ENCODE measurements at regions of chr15 and their contacts with region 1.

Region 1: DNA sequence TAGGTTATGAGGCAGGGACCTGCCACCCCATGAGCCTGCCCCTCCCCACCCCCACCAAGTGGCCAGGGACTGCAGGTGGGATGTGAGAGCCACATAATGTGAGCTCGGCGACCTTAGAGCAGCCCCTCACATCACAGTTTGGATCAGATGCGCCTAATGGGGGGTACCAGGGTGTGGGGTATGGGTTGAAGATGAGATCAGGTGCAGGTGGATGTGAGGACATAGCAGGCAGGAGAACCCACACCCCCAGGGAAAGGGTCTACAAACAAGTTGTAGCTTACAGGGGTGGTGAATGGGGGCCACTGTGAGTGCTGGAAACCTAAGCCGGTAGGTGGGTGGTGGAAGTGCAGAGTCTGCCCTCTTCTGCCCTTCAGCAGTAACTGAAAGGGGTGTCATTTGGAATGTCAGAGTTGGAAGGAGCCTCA is 94.0 kb downstream of the CORO2B start:
- DNase-seq: no peak
- H3K4me3 Mint-ChIP-seq: no peak overlapping the region
- H3K27ac Mint-ChIP-seq: no peak overlapping the region
- H3K4me1 Mint-ChIP-seq: no peaks in the 10 kb centered on the region
- H3K27me3 Mint-ChIP-seq: peaks cover 14% of the 10 kb centered on the region

Region 2: DNA sequence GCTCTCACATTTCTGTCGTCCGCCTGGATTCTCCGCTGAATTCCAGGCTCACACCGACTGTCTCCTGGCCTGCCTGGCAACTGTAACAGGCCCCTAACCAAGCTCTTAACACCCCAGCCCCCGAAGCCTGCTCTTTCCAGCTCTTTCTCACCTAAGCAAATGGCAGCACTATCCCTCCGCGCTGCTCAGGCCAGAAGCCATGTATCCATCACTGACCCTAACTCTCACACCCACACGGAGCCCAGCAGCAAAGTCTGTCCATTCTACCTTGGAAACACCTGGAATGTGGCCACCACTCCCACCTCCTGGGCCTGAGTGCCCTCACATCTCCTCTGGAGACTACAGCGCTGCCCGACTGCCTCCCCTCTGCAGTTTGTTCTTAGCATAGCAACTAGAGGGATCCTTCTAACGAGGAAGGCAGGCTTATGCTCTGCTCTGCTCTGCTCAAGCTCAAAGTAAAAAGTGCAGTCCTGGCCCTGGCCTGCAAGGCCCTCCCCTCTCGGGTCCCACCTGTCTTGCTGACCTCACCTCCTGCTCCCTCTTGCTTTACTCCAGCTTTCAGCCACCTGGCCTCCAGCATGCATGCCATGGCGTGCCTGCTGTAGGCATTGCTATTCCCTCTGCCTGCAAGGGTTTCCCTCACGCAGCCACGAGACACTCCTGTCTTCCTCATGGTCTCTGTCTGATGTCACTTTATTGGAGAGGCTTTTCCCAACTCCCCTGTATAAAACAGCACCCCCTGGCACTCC is 368.0 kb before region 1 on chr15:
- CTCF ChIA-PET with region 1: interaction called, 14 read pairs
- POLR2A ChIA-PET with region 1: no interaction called
- DNase-seq: peak; percentile 9
- H3K4me3 Mint-ChIP-seq: no peak overlapping the region
- H3K27ac Mint-ChIP-seq: no peak overlapping the region
- H3K4me1 Mint-ChIP-seq: peaks cover 9% of the 10 kb centered on the region
- H3K27me3 Mint-ChIP-seq: peaks cover 7% of the 10 kb centered on the region

Region 3: GRCh38 chr15:68559345-68560310 is 113.2 kb before region 1 on chr15:
- CTCF ChIA-PET with region 1: interaction called, 41 read pairs
- POLR2A ChIA-PET with region 1: no interaction called
- DNase-seq: peak; percentile 73
- H3K4me3 Mint-ChIP-seq: peak overlapping the region; percentile 57
- H3K27ac Mint-ChIP-seq: no peak overlapping the region
- H3K4me1 Mint-ChIP-seq: peaks cover 21% of the 10 kb centered on the region
- H3K27me3 Mint-ChIP-seq: peaks cover 50% of the 10 kb centered on the region

Region 4: DNA sequence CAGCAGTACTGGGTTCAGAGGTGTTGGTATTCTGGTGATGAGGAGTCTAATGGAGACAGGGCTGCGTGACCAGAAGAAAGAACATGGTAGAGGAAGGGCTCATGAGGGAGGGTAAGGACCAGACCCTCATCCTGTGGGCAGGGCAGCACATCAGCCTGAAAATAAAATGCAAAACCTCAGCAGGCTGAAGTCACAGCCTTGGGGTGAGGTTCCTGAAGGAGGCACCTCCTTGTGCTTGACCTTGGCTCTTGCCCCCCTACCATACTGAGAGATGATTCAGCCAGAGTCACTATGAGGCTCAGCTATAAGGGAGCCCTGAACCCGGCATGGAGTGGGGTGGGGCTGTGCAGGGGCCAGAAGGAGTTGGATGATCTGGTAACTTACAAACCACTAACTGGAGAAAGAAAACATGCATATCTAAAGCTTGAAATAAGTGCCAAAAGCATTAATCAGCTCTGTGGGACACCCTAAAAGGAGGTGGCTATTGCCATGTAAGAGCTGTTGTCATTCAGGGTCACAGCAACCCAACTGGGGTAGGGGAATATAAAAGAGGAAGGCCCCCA is 33.8 kb before region 1 on chr15:
- CTCF ChIA-PET with region 1: no interaction called
- POLR2A ChIA-PET with region 1: no interaction called
- DNase-seq: no peak
- H3K4me3 Mint-ChIP-seq: no peak overlapping the region
- H3K27ac Mint-ChIP-seq: no peak overlapping the region
- H3K4me1 Mint-ChIP-seq: no peaks in the 10 kb centered on the region
- H3K27me3 Mint-ChIP-seq: no peaks in the 10 kb centered on the region

Region 5: GRCh38 chr15:68749793-68750192 is 77.0 kb after region 1 on chr15:
- CTCF ChIA-PET with region 1: interaction called, 10 read pairs
- POLR2A ChIA-PET with region 1: no interaction called
- DNase-seq: no peak
- H3K4me3 Mint-ChIP-seq: no peak overlapping the region
- H3K27ac Mint-ChIP-seq: no peak overlapping the region
- H3K4me1 Mint-ChIP-seq: peaks cover 4% of the 10 kb centered on the region
- H3K27me3 Mint-ChIP-seq: peaks cover 7% of the 10 kb centered on the region

Region 6: DNA sequence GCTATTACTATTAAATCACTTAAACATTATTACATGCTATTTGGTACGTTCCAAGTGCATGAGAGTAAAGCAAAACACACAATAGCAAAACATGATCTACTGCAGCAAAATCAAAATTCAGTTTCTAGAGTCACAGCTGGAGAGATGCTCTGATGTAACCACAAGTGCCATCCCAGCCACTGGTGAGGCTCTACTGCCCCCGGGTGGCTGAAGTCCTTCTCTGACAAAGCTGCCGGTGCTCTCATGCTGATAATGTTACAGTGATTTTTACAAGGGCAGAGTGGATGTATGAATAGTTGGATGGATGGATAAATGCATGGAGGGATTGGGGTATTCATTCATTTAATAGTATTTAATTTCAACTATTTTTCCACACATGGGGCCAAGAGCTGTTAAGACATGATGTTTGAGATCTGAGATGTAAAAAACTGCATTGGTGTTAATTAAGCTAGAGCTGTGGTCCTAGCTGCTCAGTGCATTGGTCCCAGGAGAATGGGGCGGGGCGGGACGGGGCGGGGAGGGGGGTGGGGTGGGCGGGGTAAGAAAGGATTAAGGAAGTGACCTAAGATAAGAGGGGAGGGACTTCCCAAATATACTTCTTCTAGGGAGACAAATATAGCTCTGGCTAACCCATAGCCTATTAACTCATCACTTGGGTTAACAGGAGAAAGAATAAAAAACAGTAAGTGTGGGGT is 252.2 kb after region 1 on chr15:
- CTCF ChIA-PET with region 1: interaction called, 15 read pairs
- POLR2A ChIA-PET with region 1: no interaction called
- DNase-seq: peak; percentile 62
- H3K4me3 Mint-ChIP-seq: no peak overlapping the region
- H3K27ac Mint-ChIP-seq: no peak overlapping the region
- H3K4me1 Mint-ChIP-seq: peaks cover under 1% of the 10 kb centered on the region
- H3K27me3 Mint-ChIP-seq: peaks cover 29% of the 10 kb centered on the region

Measured in activated CD4-positive, alpha-beta memory T cell treated with anti-CD3 and anti-CD28 coated beads, Interleukin-2, amount 10 ng/mL, durations not matched to agents 7 days and 5 days (primary cell).